ENCODE measurements at regions of chr5 and their contacts with region 1.

Region 1: GRCh38 chr5:32462618-32463017 is 18.1 kb upstream of the ZFR start:
- DNase-seq: no peak
- H3K4me3 ChIP-seq: no peak overlapping the region
- CTCF ChIP-seq: no peak

Region 2: GRCh38 chr5:31948009-31948408 is 514.6 kb before region 1 on chr5:
- in situ Hi-C with region 1: no loop called
- DNase-seq: no peak
- H3K4me3 ChIP-seq: no peak overlapping the region
- CTCF ChIP-seq: no peak

Region 3: DNA sequence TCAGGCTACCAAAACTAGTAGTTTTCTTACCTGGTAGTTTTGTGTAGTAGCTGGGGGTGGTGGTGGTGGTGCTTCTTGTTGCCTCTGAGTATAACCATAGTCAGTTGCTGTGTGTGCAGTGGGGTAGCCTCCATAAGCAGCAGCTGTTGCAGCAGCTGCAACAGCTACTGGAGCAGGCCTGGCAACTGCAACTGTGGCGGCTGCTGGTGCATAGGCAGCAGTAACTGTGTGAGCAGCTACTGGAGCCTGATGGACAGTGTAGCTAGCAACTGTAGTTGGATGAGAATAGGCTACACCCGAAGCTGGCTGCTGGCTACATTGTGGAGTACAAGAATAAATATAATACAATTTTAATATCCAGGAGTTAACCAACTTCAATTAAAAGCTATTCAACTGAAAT is 42.8 kb before region 1 on chr5:
- in situ Hi-C with region 1: loop called (anchors 5 kb)
- DNase-seq: no peak
- H3K4me3 ChIP-seq: no peak overlapping the region
- CTCF ChIP-seq: no peak